ENCODE measurements at regions of chr18 and their contacts with region 1.

Region 1: DNA sequence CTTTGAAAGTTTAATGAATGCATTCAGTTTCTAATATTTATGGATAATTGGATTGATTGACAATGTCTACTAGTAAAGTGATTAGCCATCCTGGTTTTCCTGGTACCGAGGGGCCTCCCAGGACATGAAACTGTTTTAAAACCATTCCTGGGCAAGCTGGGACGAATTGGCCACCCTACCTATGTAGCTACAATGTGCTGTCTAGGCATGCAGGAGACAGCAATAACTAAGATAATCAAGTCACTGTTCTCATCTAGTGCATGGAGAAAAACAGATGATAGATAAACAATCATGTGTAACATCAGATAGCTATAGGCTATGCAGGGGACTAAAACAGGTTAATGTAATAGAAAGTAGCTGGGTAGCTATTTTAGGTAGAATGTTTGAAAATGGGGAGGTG is 67.1 kb downstream of the PMAIP1 start:
- DNase-seq: peak; percentile 67
- H3K4me3 ChIP-seq: no peak overlapping the region
- H3K27ac ChIP-seq: peak overlapping the region; percentile 12
- H3K4me1 ChIP-seq: peaks cover 14% of the 10 kb centered on the region
- H3K27me3 ChIP-seq: no peaks in the 10 kb centered on the region
- CTCF ChIP-seq: no peak

Region 2: DNA sequence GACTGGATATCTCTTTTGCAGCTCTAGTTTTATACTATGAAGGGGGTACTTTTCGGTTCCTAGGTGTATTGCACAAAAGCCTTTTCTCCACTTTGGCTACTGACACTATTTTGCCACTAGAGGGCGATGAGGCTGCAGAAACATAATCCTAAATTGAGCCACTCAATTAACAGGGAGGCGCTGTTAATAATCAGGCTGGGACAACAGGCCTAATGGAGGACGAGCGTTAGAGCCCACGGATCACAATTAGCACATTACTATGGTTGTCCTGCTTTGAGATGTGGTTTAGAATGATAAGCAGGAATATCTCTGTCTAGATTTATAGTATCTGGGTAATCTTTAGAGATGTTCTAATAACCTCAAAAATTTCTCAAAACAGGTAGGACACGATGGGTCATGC is 129.3 kb before region 1 on chr18:
- CTCF ChIA-PET with region 1: no interaction called
- dilution Hi-C with region 1: no loop called
- in situ Hi-C with region 1: loop called (anchors 10 kb)
- intact Hi-C with region 1: loop called (anchors 5 kb)
- DNase-seq: peak; percentile 64
- H3K4me3 ChIP-seq: no peak overlapping the region
- H3K27ac ChIP-seq: no peak overlapping the region
- H3K4me1 ChIP-seq: no peaks in the 10 kb centered on the region
- H3K27me3 ChIP-seq: no peaks in the 10 kb centered on the region
- CTCF ChIP-seq: peak; percentile 91 to 95

Measured in mammary epithelial cell (primary cell).